ENCODE measurements at regions of chr15 and their contacts with region 1.

Region 1: GRCh38 chr15:68672781-68673205 is 94.0 kb downstream of the CORO2B start:
- DNase-seq: no peak
- ATAC-seq: no peak
- H3K4me3 Mint-ChIP-seq: no peak overlapping the region
- H3K27ac Mint-ChIP-seq: no peak overlapping the region
- H3K4me1 Mint-ChIP-seq: peaks cover 4% of the 10 kb centered on the region
- H3K27me3 Mint-ChIP-seq: peaks cover 15% of the 10 kb centered on the region

Region 2: GRCh38 chr15:68252925-68253534 is 419.8 kb before region 1 on chr15:
- CTCF ChIA-PET with region 1: interaction called, 10 read pairs
- POLR2A ChIA-PET with region 1: no interaction called
- DNase-seq: peak; percentile 63
- ATAC-seq: peak; percentile 63
- H3K4me3 Mint-ChIP-seq: no peak overlapping the region
- H3K27ac Mint-ChIP-seq: no peak overlapping the region
- H3K4me1 Mint-ChIP-seq: peaks cover 7% of the 10 kb centered on the region
- H3K27me3 Mint-ChIP-seq: peaks cover 27% of the 10 kb centered on the region

Region 3: DNA sequence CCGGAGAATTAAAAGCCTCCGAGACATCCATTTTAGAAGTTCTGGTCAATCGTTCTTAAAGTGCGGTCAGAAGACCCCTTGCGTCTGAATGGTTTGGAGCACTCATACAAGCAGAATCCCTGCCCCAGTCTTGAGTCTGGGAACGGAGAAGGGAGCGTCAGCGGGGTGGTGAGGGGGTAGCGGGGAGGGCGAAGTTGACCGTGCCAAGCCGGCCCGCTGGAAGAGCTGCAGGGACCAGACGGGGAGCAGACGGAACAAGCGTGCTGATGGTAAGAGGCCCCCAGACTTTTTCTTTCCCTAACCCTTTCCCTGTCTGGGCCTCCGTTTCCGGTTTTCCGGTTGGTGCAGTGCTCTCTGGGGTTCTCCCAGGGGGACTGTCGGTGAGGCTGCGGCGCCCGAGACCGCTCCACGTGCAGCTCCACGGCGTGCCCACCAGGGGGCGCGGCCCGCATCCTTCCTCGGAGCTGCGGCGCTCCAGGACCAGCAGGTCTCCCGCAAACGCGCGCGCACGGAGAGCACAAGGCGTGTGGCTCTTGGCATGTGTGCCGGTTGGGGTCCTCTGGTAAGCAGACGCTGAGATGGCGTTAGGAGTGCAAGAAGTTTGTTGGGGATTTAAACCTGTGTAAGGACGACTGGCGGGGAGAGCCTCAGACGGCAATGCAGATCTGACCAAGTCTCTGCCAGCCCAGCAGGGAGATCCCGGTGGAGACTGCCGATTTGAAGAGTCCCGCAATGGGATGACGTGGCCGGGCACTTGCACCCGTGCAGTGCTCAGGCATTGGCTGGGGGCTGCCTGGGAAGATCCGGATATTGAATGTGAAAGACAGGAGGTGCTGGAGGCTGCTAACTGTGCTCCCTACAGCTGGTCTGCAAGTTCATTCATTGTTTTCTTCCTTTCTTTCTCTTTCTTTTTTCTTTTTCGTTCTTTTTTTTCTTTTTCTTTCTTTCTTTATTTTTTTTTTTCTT is 113.2 kb before region 1 on chr15:
- CTCF ChIA-PET with region 1: interaction called, 65 read pairs
- POLR2A ChIA-PET with region 1: no interaction called
- DNase-seq: peak; percentile 76
- ATAC-seq: peak; percentile 93
- H3K4me3 Mint-ChIP-seq: peak overlapping the region; percentile 57
- H3K27ac Mint-ChIP-seq: no peak overlapping the region
- H3K4me1 Mint-ChIP-seq: peaks cover 16% of the 10 kb centered on the region
- H3K27me3 Mint-ChIP-seq: peaks cover 44% of the 10 kb centered on the region

Region 4: GRCh38 chr15:68691705-68692104 is 18.9 kb after region 1 on chr15:
- CTCF ChIA-PET with region 1: interaction called, 14 read pairs
- POLR2A ChIA-PET with region 1: no interaction called
- DNase-seq: no peak
- ATAC-seq: no peak
- H3K4me3 Mint-ChIP-seq: no peak overlapping the region
- H3K27ac Mint-ChIP-seq: no peak overlapping the region
- H3K4me1 Mint-ChIP-seq: peaks cover 10% of the 10 kb centered on the region
- H3K27me3 Mint-ChIP-seq: peaks cover 16% of the 10 kb centered on the region

Region 5: DNA sequence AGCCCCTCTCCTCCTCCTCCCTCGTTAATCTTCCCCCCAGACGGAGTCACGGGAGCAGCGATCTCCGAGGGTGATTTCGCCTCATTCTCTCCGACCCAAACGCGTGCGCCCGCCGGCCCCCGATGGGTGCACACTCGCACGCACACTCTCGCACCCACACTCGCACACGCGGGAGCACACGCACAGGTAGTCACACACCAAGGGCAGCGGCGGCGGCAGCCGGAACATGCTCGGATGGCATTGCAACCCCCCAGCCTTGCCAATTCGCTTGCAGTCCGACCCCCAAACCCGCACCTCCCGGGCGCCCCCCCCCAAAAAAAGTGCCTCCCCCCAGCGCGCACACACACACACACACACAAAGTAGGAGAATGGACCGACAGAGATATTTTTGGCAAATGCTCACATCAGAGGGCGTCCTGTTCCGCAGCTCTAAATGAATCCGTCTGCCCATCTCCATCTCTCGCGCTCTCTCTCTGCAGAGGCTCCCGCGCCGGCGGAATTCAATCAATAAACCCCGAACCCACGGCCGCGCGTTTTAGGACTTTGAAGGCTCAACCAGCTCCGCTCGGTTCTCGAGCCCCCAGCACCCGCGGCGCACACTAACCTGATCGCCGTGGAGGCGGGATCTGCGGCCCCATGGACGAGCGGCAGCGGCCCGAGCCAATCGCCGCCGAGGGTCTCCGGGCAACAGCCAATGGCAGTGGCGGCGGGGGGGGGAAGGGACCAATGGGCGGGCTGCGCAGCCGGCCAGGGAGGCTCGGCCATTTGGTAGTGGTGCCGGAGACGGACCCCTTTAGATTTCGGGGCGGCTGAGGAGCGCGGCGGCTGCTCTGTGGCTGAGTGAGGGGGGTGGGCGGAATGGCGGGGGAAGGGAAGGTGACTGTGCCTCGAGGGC is 147.7 kb after region 1 on chr15 and contains the start of gene ANP32A:
- CTCF ChIA-PET with region 1: no interaction called
- POLR2A ChIA-PET with region 1: no interaction called
- DNase-seq: peak; percentile 96
- ATAC-seq: peak; percentile 76
- H3K4me3 Mint-ChIP-seq: peak within 1 kb of the TSS; percentile 100
- H3K27ac Mint-ChIP-seq: peak within 1 kb of the TSS; percentile 93
- H3K4me1 Mint-ChIP-seq: peaks cover 28% of the 10 kb centered on the region
- H3K27me3 Mint-ChIP-seq: peaks cover 3% of the 10 kb centered on the region
- total RNA-seq, gene ANP32A: 227 TPM

Measured in activated CD8-positive, alpha-beta T cell treated with anti-CD3 and anti-CD28 coated beads, Interleukin-2, amount 10 ng/mL, durations not matched to agents 7 days and 5 days (primary cell).